Breast epithelium (tissue), 4 donors: ENCODE measurements at regions of chr4 and their contacts with region 1.

Region 1: DNA sequence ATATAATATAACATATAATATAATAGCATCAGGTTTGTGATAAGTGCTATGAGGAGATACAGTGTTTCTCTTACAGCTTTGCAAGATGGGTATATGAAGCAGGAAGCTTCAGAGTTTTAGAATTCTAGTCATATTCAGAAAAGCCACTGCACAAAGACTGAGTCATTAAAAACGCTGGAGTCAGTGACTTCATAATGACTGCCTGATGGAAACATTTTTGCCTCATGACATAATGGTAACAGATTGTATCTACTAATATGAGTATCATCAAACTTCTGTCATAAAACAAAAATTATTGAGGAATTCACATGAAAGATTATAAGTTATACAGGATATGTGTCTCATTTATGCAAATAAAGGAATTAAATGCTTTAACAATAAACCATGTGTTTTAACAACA is 46.8 kb downstream of the EPHA5 start:
- DNase-seq: no peak
- H3K4me3 ChIP-seq: no peak overlapping the region
- H3K27ac ChIP-seq: no peak overlapping the region
- H3K4me1 ChIP-seq: no peaks in the 10 kb centered on the region
- H3K27me3 ChIP-seq: no peaks in the 10 kb centered on the region
- CTCF ChIP-seq: no peak
- POLR2A ChIP-seq: no peak

Region 2: GRCh38 chr4:65589331-65589730 is 34.2 kb before region 1 on chr4:
- intact Hi-C with region 1: no loop called
- DNase-seq: no peak
- H3K4me3 ChIP-seq: no peak overlapping the region
- H3K27ac ChIP-seq: no peak overlapping the region
- H3K4me1 ChIP-seq: no peaks in the 10 kb centered on the region
- H3K27me3 ChIP-seq: no peaks in the 10 kb centered on the region
- CTCF ChIP-seq: no peak
- POLR2A ChIP-seq: no peak

Region 3: GRCh38 chr4:66108898-66109297 is 485.4 kb after region 1 on chr4:
- intact Hi-C with region 1: loop called (anchors 10 kb)
- DNase-seq: no peak
- H3K4me3 ChIP-seq: no peak overlapping the region
- H3K27ac ChIP-seq: no peak overlapping the region
- H3K4me1 ChIP-seq: no peaks in the 10 kb centered on the region
- H3K27me3 ChIP-seq: no peaks in the 10 kb centered on the region
- CTCF ChIP-seq: no peak
- POLR2A ChIP-seq: no peak